ENCODE measurements at regions of chr3 and their contacts with region 1.

Region 1: DNA sequence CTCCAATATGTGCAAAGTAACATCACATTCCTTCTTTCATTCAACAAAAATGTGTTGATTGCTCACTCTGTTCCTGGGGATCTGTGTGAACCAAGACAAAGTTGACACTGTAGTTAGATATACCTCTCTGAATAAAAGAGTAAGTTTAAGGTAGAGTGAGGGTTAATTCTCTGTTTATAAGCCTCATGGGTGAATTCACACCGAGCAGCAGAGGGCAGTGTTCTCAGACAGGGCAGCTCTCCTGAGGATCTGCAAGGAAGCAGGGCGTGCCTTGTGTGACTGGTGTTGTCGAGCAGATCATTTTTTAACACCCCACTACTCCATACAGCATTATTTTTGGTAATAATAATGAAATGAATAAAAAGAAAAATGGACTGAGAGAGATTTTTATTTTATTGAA is 34.4 kb downstream of the PAQR9 start:
- DNase-seq: peak; percentile 21 to 28
- ATAC-seq: peak in 5 of 8 donors; percentile 50 to 73 (median 68)
- H3K4me3 ChIP-seq: no peak overlapping the region
- H3K27ac ChIP-seq: no peak overlapping the region
- H3K4me1 ChIP-seq: peaks cover 0 to 4% (median 0%) of the 10 kb centered on the region in 9 donors
- H3K27me3 ChIP-seq: no peaks in the 10 kb centered on the region
- CTCF ChIP-seq: peak in 7 of 9 donors; percentile 41 to 61 (median 57)

Region 2: DNA sequence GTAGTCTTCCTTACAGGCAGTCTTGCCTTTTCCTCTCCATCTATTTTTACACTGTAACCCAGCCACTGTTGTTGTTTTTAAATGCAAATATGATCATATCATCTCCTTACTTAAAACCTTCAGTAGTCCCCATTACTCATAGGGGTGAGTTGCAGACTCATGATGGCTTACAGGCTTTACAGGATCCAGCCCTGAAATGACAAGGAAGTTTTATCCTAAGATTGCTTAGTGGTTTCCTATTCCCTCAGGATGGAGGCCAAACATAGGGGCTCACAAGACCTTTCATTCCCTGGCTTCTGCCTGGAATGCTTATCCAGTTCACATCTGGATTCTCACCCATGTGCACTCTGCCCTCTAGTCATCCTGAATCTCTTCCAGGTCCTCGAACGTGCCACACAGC is 12.5 kb before region 1 on chr3:
- intact Hi-C with region 1: no loop called
- DNase-seq: no peak
- ATAC-seq: no peak
- H3K4me3 ChIP-seq: no peak overlapping the region
- H3K27ac ChIP-seq: no peak overlapping the region
- H3K4me1 ChIP-seq: peaks cover 0 to 27% (median 17%) of the 10 kb centered on the region in 9 donors
- H3K27me3 ChIP-seq: no peaks in the 10 kb centered on the region
- CTCF ChIP-seq: no peak

Region 3: DNA sequence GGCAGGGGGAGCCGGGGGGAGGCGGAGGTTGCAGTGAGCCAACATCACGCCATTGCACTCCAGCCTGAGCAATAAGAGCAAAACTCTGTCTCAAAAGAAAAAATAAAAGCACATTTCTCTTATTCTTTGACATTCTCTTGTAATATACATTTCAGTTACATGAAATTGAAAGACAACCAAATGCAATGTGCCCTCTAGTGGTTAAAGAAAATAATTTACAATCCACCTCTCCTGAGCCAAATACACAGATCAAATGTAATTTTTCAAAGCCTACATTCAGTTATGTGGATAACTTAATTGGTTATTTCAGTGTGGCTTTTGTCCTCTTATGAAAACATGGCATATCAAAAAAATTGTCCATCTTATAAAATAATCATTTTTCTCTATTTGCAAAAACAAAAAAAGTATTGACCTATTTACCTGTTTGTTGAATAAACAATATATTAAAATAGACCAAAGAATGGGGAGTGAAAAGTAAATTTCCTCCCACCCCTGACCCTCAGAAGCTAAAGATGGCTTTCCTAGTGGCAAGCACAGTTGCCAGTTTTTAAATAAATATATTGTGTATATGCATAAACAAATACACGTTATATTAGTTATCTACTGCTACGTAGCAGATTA is 58.1 kb after region 1 on chr3:
- intact Hi-C with region 1: loop called in 4 of 10 experiments (anchors 5 kb)
- DNase-seq: no peak
- ATAC-seq: peak in 5 of 8 donors; percentile 40 to 70 (median 67)
- H3K4me3 ChIP-seq: peak overlapping the region in 3 of 10 donors; percentile 0 to 5 (median 2)
- H3K27ac ChIP-seq: peak overlapping the region in 8 of 10 donors; percentile 9 to 68 (median 60)
- H3K4me1 ChIP-seq: peaks cover 0 to 15% (median 0%) of the 10 kb centered on the region in 9 donors
- H3K27me3 ChIP-seq: no peaks in the 10 kb centered on the region
- CTCF ChIP-seq: peak; percentile 39 to 81 (median 71)

Measured in heart right ventricle (tissue), 16 donors.